HEK293T (cell line): ENCODE measurements at regions of chr6 and their contacts with region 1.

Region 1: DNA sequence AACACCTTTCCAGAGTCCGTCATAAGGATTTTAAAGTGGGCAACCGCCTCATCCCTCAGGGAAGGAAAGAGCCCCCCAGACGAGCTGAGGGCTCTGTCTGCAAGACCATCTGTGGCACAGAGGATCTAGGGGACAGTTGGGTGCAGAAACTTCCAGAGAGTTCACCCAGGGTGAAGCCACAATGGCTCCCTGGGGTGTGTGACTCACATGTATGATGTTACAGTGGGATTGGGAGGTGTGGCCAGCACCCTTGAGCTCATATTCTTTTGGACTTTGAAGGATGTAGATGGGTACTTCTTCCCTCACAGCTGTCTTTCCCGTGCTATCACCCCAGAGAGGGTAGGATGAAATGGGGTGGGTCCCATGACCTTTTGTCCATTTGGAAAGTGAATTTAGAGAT is 95.5 kb downstream of the NCR2 start:
- DNase-seq: no peak

Region 2: GRCh38 chr6:41442800-41443501 is 12.1 kb after region 1 on chr6:
- CTCF ChIA-PET with region 1: interaction called, 14 read pairs
- POLR2A ChIA-PET with region 1: interaction called, 3 read pairs
- DNase-seq: peak; percentile 76